Mammary epithelial cell (primary cell): ENCODE measurements at regions of chr15 and their contacts with region 1.

Region 1: DNA sequence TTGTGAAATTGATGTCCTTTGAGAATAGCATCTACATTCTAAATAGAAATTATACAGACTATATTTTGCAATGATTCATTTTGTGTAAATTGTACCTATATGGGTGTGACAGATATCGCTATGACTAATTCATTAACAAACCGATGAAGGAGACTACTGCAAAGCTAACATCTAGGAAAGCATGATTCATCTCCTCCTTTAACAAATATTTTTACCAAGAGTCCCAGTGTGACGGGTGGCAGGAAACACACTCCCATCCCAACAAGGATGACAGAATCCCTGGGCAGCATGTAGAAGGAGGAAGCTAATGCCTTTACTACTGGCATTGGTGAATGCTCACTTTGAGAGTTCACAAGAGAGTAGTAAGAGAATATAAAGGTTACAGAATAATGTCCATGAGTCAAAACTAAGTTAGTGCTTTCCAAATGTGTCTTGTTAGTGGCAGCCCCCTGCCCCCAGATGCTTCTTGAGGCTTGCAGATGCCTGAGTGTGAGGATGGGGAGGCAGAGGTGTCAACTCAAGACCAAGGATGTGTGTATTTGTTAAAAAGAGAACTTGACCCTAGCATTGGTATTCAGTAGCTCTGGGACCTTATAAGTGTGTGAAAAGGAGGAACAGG is 180.6 kb downstream of the FMN1 start:
- DNase-seq: peak; percentile 88
- H3K4me3 ChIP-seq: no peak overlapping the region
- H3K27ac ChIP-seq: peak overlapping the region; percentile 26
- H3K4me1 ChIP-seq: peaks cover 10% of the 10 kb centered on the region
- H3K27me3 ChIP-seq: no peaks in the 10 kb centered on the region
- CTCF ChIP-seq: no peak

Region 2: DNA sequence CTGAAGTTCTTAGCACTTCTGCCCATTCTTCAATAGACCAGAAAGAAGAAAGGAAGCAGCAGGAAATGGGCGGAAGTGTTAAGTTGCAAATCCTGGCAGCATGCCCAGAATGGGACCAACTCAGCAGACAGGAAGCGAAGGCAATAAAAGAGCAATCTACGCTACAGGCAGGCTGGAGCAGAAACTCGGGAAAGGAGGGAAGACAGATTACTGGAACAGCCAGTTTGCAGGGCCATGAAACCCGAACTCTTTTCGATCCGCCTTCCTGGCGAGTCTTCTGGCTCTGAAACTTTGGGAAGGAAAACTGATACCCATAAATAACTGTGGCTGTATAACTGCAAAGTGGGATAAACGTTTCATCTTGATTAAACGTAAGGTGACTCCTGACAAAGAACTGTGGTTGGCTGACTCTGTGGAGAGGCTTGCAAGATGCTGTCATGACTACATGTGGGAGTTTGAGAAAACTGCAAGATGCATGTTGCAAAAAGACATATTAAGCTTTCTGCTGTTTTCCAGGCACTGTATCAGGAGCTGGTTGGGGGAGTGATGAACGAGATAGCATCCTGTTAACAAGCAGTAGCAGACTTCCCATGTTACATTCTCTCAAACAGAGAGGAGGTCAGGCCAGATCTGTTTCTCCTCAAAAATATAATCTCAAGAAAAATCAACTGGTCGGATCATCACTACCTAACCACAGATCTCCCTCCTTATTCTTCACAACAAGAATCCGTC is 112.8 kb after region 1 on chr15:
- CTCF ChIA-PET with region 1: no interaction called
- dilution Hi-C with region 1: loop called (anchors 5 kb)
- in situ Hi-C with region 1: no loop called
- intact Hi-C with region 1: no loop called
- DNase-seq: peak; percentile 83
- H3K4me3 ChIP-seq: no peak overlapping the region
- H3K27ac ChIP-seq: peak overlapping the region; percentile 32
- H3K4me1 ChIP-seq: peaks cover 18% of the 10 kb centered on the region
- H3K27me3 ChIP-seq: no peaks in the 10 kb centered on the region
- CTCF ChIP-seq: no peak

Region 3: GRCh38 chr15:33639978-33640377 is 626.0 kb after region 1 on chr15:
- CTCF ChIA-PET with region 1: no interaction called
- dilution Hi-C with region 1: no loop called
- in situ Hi-C with region 1: no loop called
- intact Hi-C with region 1: no loop called
- DNase-seq: no peak
- H3K4me3 ChIP-seq: no peak overlapping the region
- H3K27ac ChIP-seq: no peak overlapping the region
- H3K4me1 ChIP-seq: no peaks in the 10 kb centered on the region
- H3K27me3 ChIP-seq: peaks cover 3% of the 10 kb centered on the region
- CTCF ChIP-seq: no peak